Colonic mucosa (tissue), 4 donors: ENCODE measurements at regions of chr2 and their contacts with region 1.

Region 1: GRCh38 chr2:227411320-227411989 is 23.7 kb upstream of the SCYGR1 start:
- DNase-seq: no peak
- H3K4me3 ChIP-seq: no peak overlapping the region
- H3K27ac ChIP-seq: no peak overlapping the region
- H3K4me1 ChIP-seq: peaks cover 2% of the 10 kb centered on the region
- H3K27me3 ChIP-seq: no peaks in the 10 kb centered on the region
- CTCF ChIP-seq: no peak

Region 2: GRCh38 chr2:227228061-227228667 is 183.3 kb before region 1 on chr2:
- intact Hi-C with region 1: no loop called
- DNase-seq: peak; percentile 47
- H3K4me3 ChIP-seq: no peak overlapping the region
- H3K27ac ChIP-seq: no peak overlapping the region
- H3K4me1 ChIP-seq: no peaks in the 10 kb centered on the region
- H3K27me3 ChIP-seq: no peaks in the 10 kb centered on the region
- CTCF ChIP-seq: no peak

Region 3: DNA sequence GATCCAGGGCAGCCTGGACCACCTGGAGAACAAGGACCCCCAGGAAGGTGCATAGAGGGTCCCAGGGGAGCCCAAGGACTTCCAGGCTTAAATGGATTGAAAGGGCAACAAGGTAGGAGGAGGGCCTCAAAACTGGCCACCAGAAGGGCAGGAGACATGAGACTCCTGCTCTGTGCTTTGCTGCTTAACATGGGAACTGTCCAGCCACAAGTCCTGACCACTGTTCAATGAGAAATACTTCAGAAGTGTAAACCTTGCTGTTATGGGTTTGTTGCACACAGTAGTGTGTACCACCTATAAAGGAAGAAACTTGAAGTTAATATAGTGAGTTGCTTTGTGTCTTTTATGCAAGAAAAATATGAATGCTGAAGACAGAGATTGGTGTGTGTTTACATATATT is 130.6 kb before region 1 on chr2:
- intact Hi-C with region 1: no loop called
- DNase-seq: no peak
- H3K4me3 ChIP-seq: no peak overlapping the region
- H3K27ac ChIP-seq: no peak overlapping the region
- H3K4me1 ChIP-seq: no peaks in the 10 kb centered on the region
- H3K27me3 ChIP-seq: no peaks in the 10 kb centered on the region
- CTCF ChIP-seq: no peak

Region 4: GRCh38 chr2:227471924-227472264 is 60.4 kb after region 1 on chr2 and contains the start of gene AGFG1:
- intact Hi-C with region 1: loop called (anchors 5 kb)
- DNase-seq: peak; percentile 90
- H3K4me3 ChIP-seq: peak within 1 kb of the TSS; percentile 92
- H3K27ac ChIP-seq: peak within 1 kb of the TSS; percentile 90
- H3K4me1 ChIP-seq: peaks cover 11% of the 10 kb centered on the region
- H3K27me3 ChIP-seq: no peaks in the 10 kb centered on the region
- CTCF ChIP-seq: peak; percentile 98
- total RNA-seq, gene AGFG1: 83.3 to 101 TPM

Region 5: DNA sequence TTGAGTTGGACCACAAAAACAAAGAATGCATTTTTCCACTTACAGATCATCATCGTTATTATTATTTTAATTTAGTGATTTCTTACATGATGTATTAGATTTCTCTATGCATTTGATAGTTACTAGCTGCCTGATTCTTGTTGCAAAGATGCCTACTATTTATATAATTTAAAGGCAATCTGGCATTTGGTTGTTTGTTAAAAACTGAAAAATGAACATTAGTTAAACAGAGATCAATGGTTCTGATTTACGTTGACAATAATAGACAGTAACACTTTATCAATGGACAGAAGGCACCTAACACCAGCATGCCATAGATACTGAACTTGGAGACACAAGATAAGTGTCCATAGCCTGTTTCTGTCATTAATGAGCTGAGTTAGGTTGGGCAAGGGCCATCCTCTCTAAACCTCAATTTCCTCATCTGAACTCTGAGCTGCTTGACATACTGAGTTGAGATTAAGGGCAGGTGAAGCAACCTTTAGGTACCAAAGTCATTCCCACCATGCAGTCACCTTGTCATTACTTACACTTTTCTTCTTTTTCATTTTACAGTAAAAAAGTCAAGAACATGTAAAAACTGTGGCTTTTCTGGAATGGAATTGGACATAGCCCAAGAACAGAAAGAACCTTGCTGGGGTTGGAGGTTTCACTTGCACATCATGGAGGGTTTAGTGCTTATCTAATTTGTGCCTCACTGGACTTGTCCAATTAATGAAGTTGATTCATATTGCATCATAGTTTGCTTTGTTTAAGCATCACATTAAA is 405.2 kb after region 1 on chr2:
- intact Hi-C with region 1: no loop called
- DNase-seq: no peak
- H3K4me3 ChIP-seq: no peak overlapping the region
- H3K27ac ChIP-seq: no peak overlapping the region
- H3K4me1 ChIP-seq: no peaks in the 10 kb centered on the region
- H3K27me3 ChIP-seq: no peaks in the 10 kb centered on the region
- CTCF ChIP-seq: no peak